Activated CD8-positive, alpha-beta T cell treated with anti-CD3 and anti-CD28 coated beads, Interleukin-2, amount 10 ng/mL, durations not matched to agents 7 days and 5 days (primary cell): ENCODE measurements at regions of chr2 and their contacts with region 1.

Region 1: DNA sequence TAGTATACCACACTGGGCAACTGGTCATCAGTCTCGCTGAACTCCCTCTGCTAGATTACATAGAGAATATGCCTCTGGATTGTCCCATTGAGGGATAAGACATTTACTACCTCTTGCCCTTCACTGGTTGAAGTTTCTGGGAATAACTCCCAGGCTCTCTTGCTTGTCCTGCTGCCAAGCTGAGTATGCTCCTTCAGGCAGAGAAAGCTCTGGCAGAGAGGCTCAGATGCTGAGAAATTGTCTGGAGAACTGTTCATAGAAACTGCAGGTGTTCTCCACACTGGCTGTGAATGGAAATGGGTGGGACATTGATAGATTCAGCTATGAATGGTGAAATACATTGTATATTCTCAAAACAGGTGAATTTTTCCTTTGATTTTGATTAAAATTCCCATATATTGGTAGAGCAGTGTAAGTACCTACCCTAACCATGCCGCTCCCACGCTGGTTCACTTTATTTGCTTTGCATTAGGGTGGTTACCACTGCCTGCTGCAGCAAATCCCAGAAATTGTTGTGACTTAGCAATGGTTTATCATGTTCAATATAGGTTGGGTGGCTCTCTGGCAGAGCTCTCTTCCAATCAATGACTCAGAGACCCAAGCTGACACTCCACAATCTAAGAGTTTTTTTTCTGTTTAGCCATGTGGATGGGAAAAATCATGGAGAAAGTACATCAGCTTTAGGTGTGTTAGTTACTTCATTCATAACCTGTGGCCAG is 36.7 kb downstream of the FAM117B start:
- DNase-seq: no peak
- ATAC-seq: no peak
- H3K4me3 Mint-ChIP-seq: no peak overlapping the region
- H3K27ac Mint-ChIP-seq: no peak overlapping the region
- H3K4me1 Mint-ChIP-seq: peaks cover 67% of the 10 kb centered on the region
- H3K27me3 Mint-ChIP-seq: no peaks in the 10 kb centered on the region

Region 2: DNA sequence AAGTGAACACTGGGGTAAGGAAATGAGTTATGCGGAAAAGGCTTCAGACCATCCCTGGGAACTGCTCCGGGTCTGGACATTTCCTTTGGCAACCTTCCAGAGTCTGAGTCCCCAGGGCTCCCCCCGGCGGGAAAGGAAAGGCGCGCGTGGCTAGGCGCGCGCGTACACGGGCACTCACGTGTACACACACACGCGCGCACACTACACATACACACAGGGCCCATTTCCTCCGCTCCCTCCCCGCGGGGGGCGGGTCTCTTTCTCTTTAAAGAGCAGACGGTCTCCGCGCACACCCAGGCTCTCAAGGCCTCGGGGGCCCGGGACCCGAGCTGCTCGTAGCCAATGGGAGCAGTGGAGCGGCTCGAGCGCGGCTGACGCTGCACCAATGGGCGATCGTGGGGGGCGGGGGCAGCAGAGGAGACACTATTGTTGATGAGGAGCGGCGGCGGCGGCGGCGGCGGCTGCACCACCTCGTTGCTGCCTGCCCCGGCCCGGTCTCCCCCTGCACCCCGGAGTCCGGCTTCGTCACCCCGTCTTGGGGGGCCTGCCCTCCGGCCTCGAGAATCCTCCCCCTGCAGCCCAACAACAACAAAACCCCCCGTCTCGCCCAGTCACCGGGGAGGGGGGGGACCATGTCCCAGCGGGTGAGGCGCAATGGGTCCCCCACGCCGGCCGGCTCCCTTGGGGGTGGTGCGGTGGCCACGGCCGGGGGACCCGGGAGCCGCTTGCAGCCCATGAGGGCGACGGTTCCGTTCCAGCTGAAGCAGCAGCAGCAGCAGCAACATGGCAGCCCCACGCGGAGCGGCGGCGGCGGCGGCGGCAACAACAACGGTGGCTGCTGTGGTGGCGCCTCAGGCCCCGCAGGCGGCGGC is 36.7 kb before region 1 on chr2 and contains the start of gene FAM117B:
- CTCF ChIA-PET with region 1: interaction called, 5 read pairs
- POLR2A ChIA-PET with region 1: interaction called, 14 read pairs
- DNase-seq: peak; percentile 99
- ATAC-seq: peak; percentile 92
- H3K4me3 Mint-ChIP-seq: peak within 1 kb of the TSS; percentile 95
- H3K27ac Mint-ChIP-seq: peak within 1 kb of the TSS; percentile 92
- H3K4me1 Mint-ChIP-seq: peaks cover 52% of the 10 kb centered on the region
- H3K27me3 Mint-ChIP-seq: no peaks in the 10 kb centered on the region
- total RNA-seq, gene FAM117B: 17.1 to 18.8 TPM